ENCODE measurements at regions of chr13 and their contacts with region 1.

Region 1: GRCh38 chr13:65410791-65411190 is 1819.3 kb downstream of the PCDH9 start:
- DNase-seq: no peak
- H3K4me3 ChIP-seq: no peak overlapping the region
- H3K27ac ChIP-seq: no peak overlapping the region
- H3K4me1 ChIP-seq: no peaks in the 10 kb centered on the region
- H3K27me3 ChIP-seq: no peaks in the 10 kb centered on the region
- CTCF ChIP-seq: no peak
- EP300 ChIP-seq: no peak
- POLR2A ChIP-seq: no peak

Region 2: GRCh38 chr13:65387743-65388347 is 22.9 kb before region 1 on chr13:
- in situ Hi-C with region 1: no loop called
- intact Hi-C with region 1: loop called (anchors 1 kb)
- DNase-seq: no peak
- H3K4me3 ChIP-seq: no peak overlapping the region
- H3K27ac ChIP-seq: no peak overlapping the region
- H3K4me1 ChIP-seq: no peaks in the 10 kb centered on the region
- H3K27me3 ChIP-seq: no peaks in the 10 kb centered on the region
- CTCF ChIP-seq: no peak
- EP300 ChIP-seq: no peak
- POLR2A ChIP-seq: no peak

Region 3: GRCh38 chr13:65468628-65469027 is 57.8 kb after region 1 on chr13:
- in situ Hi-C with region 1: no loop called
- intact Hi-C with region 1: no loop called
- DNase-seq: no peak
- H3K4me3 ChIP-seq: no peak overlapping the region
- H3K27ac ChIP-seq: no peak overlapping the region
- H3K4me1 ChIP-seq: no peaks in the 10 kb centered on the region
- H3K27me3 ChIP-seq: no peaks in the 10 kb centered on the region
- CTCF ChIP-seq: no peak
- EP300 ChIP-seq: no peak
- POLR2A ChIP-seq: no peak